ENCODE measurements at regions of chr2 and their contacts with region 1.

Region 1: DNA sequence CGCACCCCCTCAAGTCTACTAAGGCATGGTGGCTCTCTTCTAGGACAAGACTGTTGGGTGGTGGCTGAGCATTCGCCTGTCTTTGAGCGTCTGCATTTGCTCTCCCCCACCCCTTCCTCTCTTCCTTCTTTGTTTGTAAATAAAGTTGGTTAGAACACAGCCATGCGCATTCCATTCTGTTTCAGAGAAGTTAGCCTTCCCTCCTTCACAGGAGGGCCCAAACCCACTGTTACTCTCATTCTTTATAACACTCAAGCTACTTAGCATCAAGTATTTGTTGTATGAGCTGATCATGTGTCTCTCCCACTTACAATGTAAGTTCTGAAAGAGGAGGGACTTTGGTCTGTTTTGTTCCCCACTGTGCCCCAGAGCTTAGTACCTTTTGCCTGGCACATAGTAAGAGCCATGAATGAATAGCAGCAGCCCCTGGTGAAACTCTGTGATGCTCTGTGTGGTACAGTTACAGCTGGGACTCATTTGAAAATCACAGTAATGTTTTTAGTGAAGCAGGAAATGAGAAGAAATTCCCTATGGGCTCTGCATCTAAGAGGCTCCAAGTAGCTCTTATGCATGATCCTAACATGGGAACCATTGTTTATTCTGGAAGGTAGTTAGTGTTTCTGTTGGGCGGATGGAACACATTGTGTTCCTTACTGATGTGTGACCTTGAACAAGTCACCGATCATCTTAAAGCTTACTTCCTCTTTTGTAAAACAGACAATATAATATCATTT is 7.7 kb downstream of the MGAT5 start:
- DNase-seq: no peak
- ATAC-seq: no peak
- H3K4me3 ChIP-seq: no peak overlapping the region
- H3K4me3 Mint-ChIP-seq: peak overlapping the region in 9 of 10 donors; percentile 15 to 71 (median 34)
- H3K27ac ChIP-seq: no peak overlapping the region
- H3K27ac Mint-ChIP-seq: peak overlapping the region in 8 of 9 donors; percentile 2 to 93 (median 54)
- H3K4me1 ChIP-seq: peaks cover 27 to 61% of the 10 kb centered on the region in 2 donors
- H3K4me1 Mint-ChIP-seq: peaks cover 46 to 77% (median 71%) of the 10 kb centered on the region in 7 donors
- H3K27me3 ChIP-seq: no peaks in the 10 kb centered on the region
- H3K27me3 Mint-ChIP-seq: no peaks in the 10 kb centered on the region

Region 2: DNA sequence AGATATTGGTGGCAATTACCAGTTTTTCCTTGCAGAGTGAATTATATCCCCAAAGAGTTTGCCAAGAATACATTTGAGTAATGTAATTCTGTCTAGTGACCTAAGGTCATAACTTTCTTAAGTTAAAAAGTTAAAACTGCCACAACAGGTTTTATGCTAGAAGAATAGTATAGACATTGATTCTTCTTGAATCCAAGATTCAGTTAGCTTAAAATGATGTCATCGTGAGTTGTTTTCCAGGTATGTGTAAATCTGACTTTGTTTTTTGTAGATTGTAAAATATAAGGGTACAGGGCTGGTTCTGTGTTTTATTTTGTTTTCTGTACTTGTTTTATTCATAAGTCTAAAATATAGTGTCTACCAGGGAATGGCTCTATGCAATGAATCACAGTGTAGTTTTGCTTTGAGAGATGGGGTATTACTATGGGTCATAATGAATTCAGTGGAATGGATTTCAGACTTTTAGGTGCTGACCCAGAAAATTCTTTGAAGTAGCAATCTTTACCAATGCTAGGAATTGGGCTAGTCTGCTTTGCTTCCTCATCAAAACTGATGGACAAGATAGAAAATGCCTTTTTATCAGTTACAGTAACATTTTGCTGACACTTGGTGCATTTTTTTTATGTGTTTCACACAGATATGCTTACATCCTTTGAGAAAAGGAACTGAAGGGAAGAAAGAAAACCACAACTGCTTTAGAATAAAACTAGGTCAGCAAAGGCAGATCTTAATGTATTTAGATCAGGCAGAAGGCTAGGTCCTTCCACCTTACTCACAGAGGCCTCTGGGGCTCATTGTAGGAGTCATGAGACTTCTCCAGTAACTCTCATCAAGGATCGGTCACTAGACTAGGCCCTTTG is 28.5 kb before region 1 on chr2:
- CTCF ChIA-PET with region 1: interaction called, 3 read pairs
- POLR2A ChIA-PET with region 1: interaction called, 3 read pairs
- intact Hi-C with region 1: loop called (anchors 1 kb)
- DNase-seq: peak in 7 of 9 donors; percentile 13 to 68 (median 57)
- ATAC-seq: peak; percentile 84
- H3K4me3 ChIP-seq: peak overlapping the region; percentile 17
- H3K4me3 Mint-ChIP-seq: peak overlapping the region; percentile 29 to 81 (median 64)
- H3K27ac ChIP-seq: peak overlapping the region; percentile 37
- H3K27ac Mint-ChIP-seq: peak overlapping the region; percentile 62 to 87 (median 76)
- H3K4me1 ChIP-seq: peaks cover 56 to 59% of the 10 kb centered on the region in 2 donors
- H3K4me1 Mint-ChIP-seq: peaks cover 57 to 80% (median 75%) of the 10 kb centered on the region in 7 donors
- H3K27me3 ChIP-seq: no peaks in the 10 kb centered on the region
- H3K27me3 Mint-ChIP-seq: no peaks in the 10 kb centered on the region

Region 3: DNA sequence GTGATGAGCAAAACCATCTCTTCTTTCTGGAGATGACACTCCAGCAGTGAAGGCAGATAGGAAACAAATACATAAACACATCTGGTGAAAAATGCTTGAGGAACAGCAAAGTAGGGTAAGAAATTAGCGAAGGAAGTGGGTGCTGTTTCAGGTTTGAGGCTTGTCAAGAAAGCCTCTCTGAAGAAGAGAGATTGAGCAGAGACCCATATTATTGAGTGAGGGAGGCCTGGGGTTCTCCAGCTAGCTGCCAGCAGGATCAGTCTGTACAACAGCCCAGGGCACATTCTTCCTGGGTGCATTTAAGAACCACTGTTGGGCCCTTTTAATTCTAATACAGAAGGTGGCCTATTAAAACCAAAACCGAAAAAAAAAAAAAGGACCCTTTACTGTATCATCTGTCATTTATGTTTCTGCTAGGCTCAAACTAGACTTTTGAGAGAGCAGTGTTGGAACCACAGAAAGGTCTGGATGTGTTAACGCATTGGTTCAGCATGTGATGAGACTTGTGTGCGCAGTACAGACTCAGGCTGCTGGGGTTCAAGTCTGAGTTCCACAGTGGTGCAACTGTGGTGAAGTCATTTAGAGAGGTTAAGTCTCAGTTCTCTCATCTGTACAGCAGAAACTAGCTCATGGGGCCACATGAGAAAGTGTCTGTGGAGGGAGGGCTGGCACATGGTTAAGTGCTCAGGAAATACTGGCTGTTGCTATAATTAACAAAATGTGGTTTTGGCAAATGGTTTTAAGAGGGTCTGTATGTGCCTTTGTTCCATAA is 21.2 kb after region 1 on chr2:
- CTCF ChIA-PET with region 1: no interaction called
- POLR2A ChIA-PET with region 1: interaction called, 7 read pairs
- intact Hi-C with region 1: loop called in 1 of 2 experiments (anchors 1 kb)
- DNase-seq: peak in 5 of 9 donors; percentile 13 to 46 (median 28)
- ATAC-seq: peak; percentile 75
- H3K4me3 ChIP-seq: no peak overlapping the region
- H3K4me3 Mint-ChIP-seq: peak overlapping the region; percentile 53 to 86 (median 65)
- H3K27ac ChIP-seq: peak overlapping the region; percentile 33
- H3K27ac Mint-ChIP-seq: peak overlapping the region; percentile 72 to 96 (median 91)
- H3K4me1 ChIP-seq: peaks cover 32 to 47% of the 10 kb centered on the region in 2 donors
- H3K4me1 Mint-ChIP-seq: peaks cover 15 to 69% (median 54%) of the 10 kb centered on the region in 7 donors
- H3K27me3 ChIP-seq: no peaks in the 10 kb centered on the region
- H3K27me3 Mint-ChIP-seq: peaks cover 0 to 8% (median 0%) of the 10 kb centered on the region in 5 donors

Region 4: GRCh38 chr2:134290358-134290757 is 28.8 kb after region 1 on chr2:
- CTCF ChIA-PET with region 1: no interaction called
- POLR2A ChIA-PET with region 1: interaction called, 3 read pairs
- intact Hi-C with region 1: loop called (anchors 2 to 5 kb)
- DNase-seq: peak in 4 of 9 donors; percentile 13 to 37 (median 29)
- ATAC-seq: peak; percentile 55
- H3K4me3 ChIP-seq: peak overlapping the region; percentile 2
- H3K4me3 Mint-ChIP-seq: no peak overlapping the region
- H3K27ac ChIP-seq: peak overlapping the region; percentile 33
- H3K27ac Mint-ChIP-seq: no peak overlapping the region
- H3K4me1 ChIP-seq: peaks cover 48 to 77% of the 10 kb centered on the region in 2 donors
- H3K4me1 Mint-ChIP-seq: peaks cover 0 to 39% (median 30%) of the 10 kb centered on the region in 7 donors
- H3K27me3 ChIP-seq: no peaks in the 10 kb centered on the region
- H3K27me3 Mint-ChIP-seq: peaks cover 0 to 8% (median 0%) of the 10 kb centered on the region in 5 donors

Region 5: GRCh38 chr2:134324947-134325346 is 63.4 kb after region 1 on chr2:
- CTCF ChIA-PET with region 1: no interaction called
- POLR2A ChIA-PET with region 1: no interaction called
- intact Hi-C with region 1: loop called (anchors 1 to 2 kb)
- DNase-seq: no peak
- ATAC-seq: peak; percentile 65
- H3K4me3 ChIP-seq: no peak overlapping the region
- H3K4me3 Mint-ChIP-seq: peak overlapping the region in 2 of 10 donors; percentile 11 to 57
- H3K27ac ChIP-seq: no peak overlapping the region
- H3K27ac Mint-ChIP-seq: peak overlapping the region in 3 of 9 donors; percentile 45 to 59 (median 46)
- H3K4me1 ChIP-seq: peaks cover 19 to 29% of the 10 kb centered on the region in 2 donors
- H3K4me1 Mint-ChIP-seq: peaks cover 59 to 73% (median 66%) of the 10 kb centered on the region in 7 donors
- H3K27me3 ChIP-seq: no peaks in the 10 kb centered on the region
- H3K27me3 Mint-ChIP-seq: no peaks in the 10 kb centered on the region

Region 6: GRCh38 chr2:134368009-134368817 is 106.6 kb after region 1 on chr2:
- CTCF ChIA-PET with region 1: no interaction called
- POLR2A ChIA-PET with region 1: no interaction called
- intact Hi-C with region 1: loop called in 1 of 2 experiments (anchors 5 kb)
- DNase-seq: peak in 3 of 9 donors; percentile 4 to 39 (median 8)
- ATAC-seq: peak; percentile 31
- H3K4me3 ChIP-seq: no peak overlapping the region
- H3K4me3 Mint-ChIP-seq: peak overlapping the region in 3 of 10 donors; percentile 9 to 53 (median 19)
- H3K27ac ChIP-seq: no peak overlapping the region
- H3K27ac Mint-ChIP-seq: peak overlapping the region in 7 of 9 donors; percentile 7 to 85 (median 40)
- H3K4me1 ChIP-seq: peaks cover 0 to 21% of the 10 kb centered on the region in 2 donors
- H3K4me1 Mint-ChIP-seq: peaks cover 20 to 44% (median 39%) of the 10 kb centered on the region in 7 donors
- H3K27me3 ChIP-seq: no peaks in the 10 kb centered on the region
- H3K27me3 Mint-ChIP-seq: no peaks in the 10 kb centered on the region

Region 7: GRCh38 chr2:134431838-134432434 is 170.4 kb after region 1 on chr2:
- CTCF ChIA-PET with region 1: no interaction called
- POLR2A ChIA-PET with region 1: no interaction called
- intact Hi-C with region 1: no loop called
- DNase-seq: no peak
- ATAC-seq: no peak
- H3K4me3 ChIP-seq: no peak overlapping the region
- H3K4me3 Mint-ChIP-seq: no peak overlapping the region
- H3K27ac ChIP-seq: no peak overlapping the region
- H3K27ac Mint-ChIP-seq: no peak overlapping the region
- H3K4me1 ChIP-seq: no peaks in the 10 kb centered on the region
- H3K4me1 Mint-ChIP-seq: peaks cover 0 to 6% (median 0%) of the 10 kb centered on the region in 7 donors
- H3K27me3 ChIP-seq: no peaks in the 10 kb centered on the region
- H3K27me3 Mint-ChIP-seq: no peaks in the 10 kb centered on the region

Region 8: GRCh38 chr2:135741395-135742324 is 1480.1 kb after region 1 on chr2 and contains the start of gene UBXN4:
- CTCF ChIA-PET with region 1: no interaction called
- POLR2A ChIA-PET with region 1: no interaction called
- intact Hi-C with region 1: loop called in 1 of 2 experiments (anchors 10 kb)
- DNase-seq: peak; percentile 73 to 93 (median 88)
- ATAC-seq: peak; percentile 95
- H3K4me3 ChIP-seq: peak within 1 kb of the TSS; percentile 88
- H3K4me3 Mint-ChIP-seq: peak within 1 kb of the TSS; percentile 92 to 98 (median 95)
- H3K27ac ChIP-seq: peak within 1 kb of the TSS; percentile 97
- H3K27ac Mint-ChIP-seq: peak within 1 kb of the TSS; percentile 89 to 99 (median 95)
- H3K4me1 ChIP-seq: peaks cover 20 to 22% of the 10 kb centered on the region in 2 donors
- H3K4me1 Mint-ChIP-seq: peaks cover 24 to 47% (median 43%) of the 10 kb centered on the region in 7 donors
- H3K27me3 ChIP-seq: no peaks in the 10 kb centered on the region
- H3K27me3 Mint-ChIP-seq: no peaks in the 10 kb centered on the region
- total RNA-seq, gene UBXN4: 115 to 158 (median 145) TPM